Breast epithelium (tissue), 4 donors: ENCODE measurements at regions of chr2 and their contacts with region 1.

Region 1: DNA sequence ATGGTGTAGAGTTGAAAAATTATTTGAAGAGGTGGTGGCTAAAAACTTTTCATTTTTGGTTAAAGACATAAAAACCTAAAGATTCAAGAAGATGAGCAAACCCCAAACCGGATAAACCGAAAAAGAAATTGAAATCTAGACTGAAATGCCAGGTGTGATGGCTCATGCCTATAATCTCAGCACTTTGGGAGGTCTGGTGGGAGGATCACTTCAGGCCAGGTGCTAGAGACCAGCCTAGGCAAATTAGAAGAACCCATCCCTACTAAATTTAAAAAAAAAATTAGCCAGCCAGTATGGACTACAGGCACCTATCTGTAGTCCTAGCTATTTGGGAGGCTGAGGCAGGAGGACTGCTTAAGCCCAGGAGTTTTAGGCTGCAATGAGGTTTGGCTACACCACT is 126.9 kb downstream of the BAZ2B start:
- DNase-seq: no peak
- H3K4me3 ChIP-seq: no peak overlapping the region
- H3K27ac ChIP-seq: no peak overlapping the region
- H3K4me1 ChIP-seq: no peaks in the 10 kb centered on the region
- H3K27me3 ChIP-seq: no peaks in the 10 kb centered on the region
- CTCF ChIP-seq: no peak
- POLR2A ChIP-seq: no peak

Region 2: DNA sequence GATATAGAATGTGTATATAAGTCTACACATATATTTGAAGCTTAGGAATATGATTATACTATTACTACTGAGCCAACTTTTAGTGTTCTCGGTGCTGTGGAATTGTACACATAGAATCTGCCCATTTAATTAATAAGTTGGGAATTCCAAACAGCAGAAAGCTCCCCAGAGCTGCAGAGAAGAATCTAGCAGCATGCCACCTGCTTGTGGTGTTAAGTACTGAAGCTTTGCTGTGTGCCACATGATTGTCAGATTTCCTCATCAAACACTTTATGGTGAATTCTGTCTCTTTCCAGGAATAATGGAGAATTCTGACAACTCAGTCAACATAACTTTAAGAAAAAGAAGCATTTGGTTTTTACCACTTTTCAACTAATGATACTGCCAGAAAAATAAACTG is 320.8 kb before region 1 on chr2:
- intact Hi-C with region 1: loop called (anchors 5 kb)
- DNase-seq: no peak
- H3K4me3 ChIP-seq: no peak overlapping the region
- H3K27ac ChIP-seq: no peak overlapping the region
- H3K4me1 ChIP-seq: no peaks in the 10 kb centered on the region
- H3K27me3 ChIP-seq: no peaks in the 10 kb centered on the region
- CTCF ChIP-seq: no peak
- POLR2A ChIP-seq: no peak